AG04450 (cell line): ENCODE measurements at regions of chr15 and their contacts with region 1.

Region 1: GRCh38 chr15:31977812-31978661 is 52.3 kb upstream of the CHRNA7 start:
- DNase-seq: no peak
- H3K4me3 ChIP-seq: no peak overlapping the region
- H3K27ac ChIP-seq: no peak overlapping the region
- H3K27me3 ChIP-seq: no peaks in the 10 kb centered on the region
- CTCF ChIP-seq: peak; percentile 76

Region 2: DNA sequence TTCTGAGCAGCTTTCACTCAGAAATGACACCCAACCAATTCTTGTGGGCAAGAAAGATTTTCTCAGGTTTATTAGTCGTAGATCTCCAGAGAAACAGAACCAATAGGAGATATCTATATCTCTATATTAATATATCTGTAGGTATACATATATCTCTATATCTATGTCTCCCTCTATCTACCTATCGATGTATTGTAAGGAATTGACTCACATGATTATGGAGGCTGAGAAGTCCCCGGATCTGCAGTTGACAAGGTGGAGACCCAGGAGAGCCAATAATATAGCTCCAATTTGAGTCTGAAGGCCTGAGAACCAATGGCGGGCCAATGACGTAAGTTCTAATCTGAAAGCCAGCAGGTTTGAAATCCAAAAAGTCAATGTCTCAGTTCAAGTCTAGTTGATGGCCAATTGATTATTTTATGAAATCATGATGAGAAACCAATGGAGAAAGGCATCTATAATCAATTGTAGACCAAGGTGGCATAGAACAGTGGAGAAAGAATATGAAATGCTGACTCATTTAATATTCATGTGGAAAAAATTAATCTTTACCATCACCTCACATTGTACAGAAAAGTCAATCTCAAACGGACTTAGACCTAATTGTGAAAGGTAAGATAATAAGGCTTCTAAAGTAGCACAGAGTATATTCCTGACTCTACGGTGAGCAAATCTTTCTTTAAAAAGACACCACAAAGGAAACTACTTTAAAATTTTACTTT is 13.3 kb before region 1 on chr15:
- CTCF ChIA-PET with region 1: interaction called, 29 read pairs
- POLR2A ChIA-PET with region 1: no interaction called
- DNase-seq: no peak
- H3K4me3 ChIP-seq: no peak overlapping the region
- H3K27ac ChIP-seq: no peak overlapping the region
- H3K27me3 ChIP-seq: no peaks in the 10 kb centered on the region
- CTCF ChIP-seq: no peak

Region 3: DNA sequence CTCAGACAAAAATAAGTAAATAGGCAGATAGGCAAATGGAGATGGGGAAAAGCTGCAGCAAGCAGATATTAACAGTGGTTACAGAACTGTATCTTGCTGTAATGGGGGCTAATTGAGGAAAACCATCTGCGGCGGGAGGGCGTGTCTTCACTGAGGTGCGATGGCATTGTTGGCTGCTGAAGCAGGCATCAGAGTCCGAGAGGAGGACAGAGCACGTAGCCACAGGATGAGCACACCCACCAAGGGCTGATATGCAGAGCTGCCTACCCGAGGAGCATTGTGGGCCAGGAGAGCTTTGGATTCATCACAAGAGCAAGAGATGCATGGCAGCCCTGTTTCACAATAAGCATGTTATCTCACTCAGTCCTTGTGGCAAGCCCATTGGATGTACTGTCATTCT is 82.7 kb after region 1 on chr15:
- CTCF ChIA-PET with region 1: no interaction called
- POLR2A ChIA-PET with region 1: no interaction called
- DNase-seq: no peak
- H3K4me3 ChIP-seq: no peak overlapping the region
- H3K27ac ChIP-seq: no peak overlapping the region
- H3K27me3 ChIP-seq: no peaks in the 10 kb centered on the region
- CTCF ChIP-seq: no peak

Region 4: GRCh38 chr15:32091505-32092380 is 113.7 kb after region 1 on chr15:
- CTCF ChIA-PET with region 1: no interaction called
- POLR2A ChIA-PET with region 1: no interaction called
- DNase-seq: no peak
- H3K4me3 ChIP-seq: no peak overlapping the region
- H3K27ac ChIP-seq: no peak overlapping the region
- H3K27me3 ChIP-seq: no peaks in the 10 kb centered on the region
- CTCF ChIP-seq: no peak